ENCODE measurements at regions of chr2 and their contacts with region 1.

Region 1: DNA sequence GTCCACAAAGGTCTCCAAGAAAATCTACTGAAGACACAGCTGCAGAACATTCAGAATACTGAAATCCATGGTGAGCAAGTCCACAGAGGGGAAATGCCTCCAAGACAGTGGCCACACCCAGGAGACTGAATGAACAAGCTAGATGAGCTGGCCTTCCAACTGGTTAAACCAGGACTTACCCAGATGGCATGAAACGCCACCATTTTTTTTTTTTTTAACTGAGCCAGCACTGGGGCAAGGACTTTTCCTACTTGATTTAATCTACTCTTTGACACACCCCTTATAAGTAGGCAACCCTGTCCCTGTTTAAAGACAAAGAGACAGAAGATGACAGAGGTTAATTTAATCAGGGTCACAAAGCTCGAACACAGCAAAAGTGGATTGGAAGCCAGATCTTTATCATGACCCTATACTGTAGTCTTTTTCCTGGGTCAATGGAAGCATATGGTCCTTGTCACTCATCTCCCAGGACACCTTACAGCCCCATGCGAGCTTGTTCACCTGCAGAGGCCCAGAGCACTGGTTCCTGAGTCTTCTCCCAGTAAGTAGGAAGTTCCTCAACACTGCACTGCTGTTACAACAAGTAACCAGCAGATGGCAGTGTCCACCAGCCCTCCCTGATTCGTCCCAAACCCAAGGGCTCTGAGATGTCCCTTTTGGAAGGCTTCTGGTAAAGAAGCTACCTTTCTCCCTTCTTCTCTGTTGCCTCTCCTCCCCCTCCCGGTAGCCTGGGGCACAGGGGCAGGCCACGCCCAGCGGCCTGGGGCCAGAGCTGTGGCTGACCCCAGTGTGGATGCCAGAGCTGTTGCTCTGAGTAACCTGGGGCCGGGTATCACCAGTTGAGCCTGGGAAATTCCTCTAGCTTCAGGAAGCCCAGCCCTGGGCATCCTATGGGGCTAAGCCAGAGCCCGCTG is 5.6 kb upstream of the GDF7 start:
- DNase-seq: peak; percentile 86
- ATAC-seq: peak; percentile 73
- H3K4me3 ChIP-seq: no peak overlapping the region
- H3K4me3 Mint-ChIP-seq: no peak overlapping the region
- H3K27ac ChIP-seq: no peak overlapping the region
- H3K27ac Mint-ChIP-seq: no peak overlapping the region
- H3K4me1 ChIP-seq: peaks cover 11 to 28% of the 10 kb centered on the region in 2 donors
- H3K4me1 Mint-ChIP-seq: peaks cover 22% of the 10 kb centered on the region
- H3K27me3 ChIP-seq: peaks cover 0 to 55% (median 7%) of the 10 kb centered on the region in 4 experiments
- H3K27me3 Mint-ChIP-seq: peaks cover 26% of the 10 kb centered on the region
- CTCF ChIP-seq: peak; percentile 98

Region 2: GRCh38 chr2:20682167-20682920 is 21.0 kb after region 1 on chr2:
- CTCF ChIA-PET with region 1: interaction called, 160 read pairs
- POLR2A ChIA-PET with region 1: interaction called, 74 read pairs
- intact Hi-C with region 1: loop called (anchors 2 kb)
- DNase-seq: no peak
- ATAC-seq: no peak
- H3K4me3 ChIP-seq: no peak overlapping the region
- H3K4me3 Mint-ChIP-seq: no peak overlapping the region
- H3K27ac ChIP-seq: no peak overlapping the region
- H3K27ac Mint-ChIP-seq: peak overlapping the region; percentile 71
- H3K4me1 ChIP-seq: peaks cover 5 to 27% of the 10 kb centered on the region in 2 donors
- H3K4me1 Mint-ChIP-seq: peaks cover 16% of the 10 kb centered on the region
- H3K27me3 ChIP-seq: no peaks in the 10 kb centered on the region
- H3K27me3 Mint-ChIP-seq: no peaks in the 10 kb centered on the region
- CTCF ChIP-seq: peak; percentile 23

Region 3: GRCh38 chr2:20755132-20755800 is 93.9 kb after region 1 on chr2:
- CTCF ChIA-PET with region 1: interaction called, 9 read pairs
- POLR2A ChIA-PET with region 1: no interaction called
- intact Hi-C with region 1: loop called (anchors 2 kb)
- DNase-seq: peak; percentile 27
- ATAC-seq: no peak
- H3K4me3 ChIP-seq: no peak overlapping the region
- H3K4me3 Mint-ChIP-seq: no peak overlapping the region
- H3K27ac ChIP-seq: no peak overlapping the region
- H3K27ac Mint-ChIP-seq: no peak overlapping the region
- H3K4me1 ChIP-seq: no peaks in the 10 kb centered on the region
- H3K4me1 Mint-ChIP-seq: peaks cover 4% of the 10 kb centered on the region
- H3K27me3 ChIP-seq: no peaks in the 10 kb centered on the region
- H3K27me3 Mint-ChIP-seq: no peaks in the 10 kb centered on the region
- CTCF ChIP-seq: peak; percentile 26

Region 4: DNA sequence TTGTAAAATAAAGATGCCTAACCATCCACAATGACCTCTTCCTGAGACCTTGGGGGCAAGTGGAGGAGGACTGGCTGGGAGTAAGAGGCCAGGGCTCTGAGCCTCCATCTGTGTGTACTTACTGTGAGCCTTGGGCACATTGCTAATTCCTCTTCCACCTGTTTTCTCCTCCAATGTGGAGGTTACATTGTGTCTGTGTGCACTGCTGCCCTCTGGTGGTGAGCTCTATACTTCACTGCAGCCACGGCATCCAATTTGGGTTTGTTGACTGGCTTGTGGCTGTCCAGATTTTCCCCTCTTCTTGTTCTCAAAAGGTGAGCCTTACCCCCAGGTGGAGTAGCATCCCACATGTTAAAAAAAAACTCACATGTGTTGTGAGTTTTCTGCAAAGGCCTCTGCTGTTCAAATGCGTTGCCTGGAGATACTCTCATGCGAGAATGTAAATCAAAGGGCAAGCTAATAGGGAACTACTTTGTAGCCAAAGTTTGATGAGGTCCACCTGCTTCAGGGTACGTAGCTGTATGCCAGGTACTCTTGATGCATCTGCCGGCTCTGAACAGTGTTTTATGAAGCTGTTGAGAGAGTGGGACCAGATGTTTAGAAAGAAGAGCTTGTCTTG is 301.7 kb after region 1 on chr2:
- CTCF ChIA-PET with region 1: interaction called, 331 read pairs
- POLR2A ChIA-PET with region 1: interaction called, 5 read pairs
- intact Hi-C with region 1: no loop called
- DNase-seq: peak; percentile 78
- ATAC-seq: peak; percentile 65
- H3K4me3 ChIP-seq: no peak overlapping the region
- H3K4me3 Mint-ChIP-seq: no peak overlapping the region
- H3K27ac ChIP-seq: no peak overlapping the region
- H3K27ac Mint-ChIP-seq: no peak overlapping the region
- H3K4me1 ChIP-seq: no peaks in the 10 kb centered on the region
- H3K4me1 Mint-ChIP-seq: no peaks in the 10 kb centered on the region
- H3K27me3 ChIP-seq: peaks cover 0 to 16% (median 4%) of the 10 kb centered on the region in 4 experiments
- H3K27me3 Mint-ChIP-seq: peaks cover 26% of the 10 kb centered on the region
- CTCF ChIP-seq: peak; percentile 92

Measured in B cell (primary cell).